Right ventricle myocardium superior (tissue), 1 donor: ENCODE measurements at regions of chr1 and their contacts with region 1.

Region 1: GRCh38 chr1:65138524-65138923 is 9.5 kb upstream of the AK4 start:
- DNase-seq: no peak
- ATAC-seq: no peak

Region 2: GRCh38 chr1:65083263-65083896 is 55.1 kb before region 1 on chr1:
- intact Hi-C with region 1: loop called (anchors 10 kb)
- DNase-seq: no peak
- ATAC-seq: no peak

Region 3: GRCh38 chr1:65360648-65361047 is 222.1 kb after region 1 on chr1:
- intact Hi-C with region 1: no loop called
- DNase-seq: no peak
- ATAC-seq: no peak